ENCODE measurements at regions of chr3 and their contacts with region 1.

Region 1: DNA sequence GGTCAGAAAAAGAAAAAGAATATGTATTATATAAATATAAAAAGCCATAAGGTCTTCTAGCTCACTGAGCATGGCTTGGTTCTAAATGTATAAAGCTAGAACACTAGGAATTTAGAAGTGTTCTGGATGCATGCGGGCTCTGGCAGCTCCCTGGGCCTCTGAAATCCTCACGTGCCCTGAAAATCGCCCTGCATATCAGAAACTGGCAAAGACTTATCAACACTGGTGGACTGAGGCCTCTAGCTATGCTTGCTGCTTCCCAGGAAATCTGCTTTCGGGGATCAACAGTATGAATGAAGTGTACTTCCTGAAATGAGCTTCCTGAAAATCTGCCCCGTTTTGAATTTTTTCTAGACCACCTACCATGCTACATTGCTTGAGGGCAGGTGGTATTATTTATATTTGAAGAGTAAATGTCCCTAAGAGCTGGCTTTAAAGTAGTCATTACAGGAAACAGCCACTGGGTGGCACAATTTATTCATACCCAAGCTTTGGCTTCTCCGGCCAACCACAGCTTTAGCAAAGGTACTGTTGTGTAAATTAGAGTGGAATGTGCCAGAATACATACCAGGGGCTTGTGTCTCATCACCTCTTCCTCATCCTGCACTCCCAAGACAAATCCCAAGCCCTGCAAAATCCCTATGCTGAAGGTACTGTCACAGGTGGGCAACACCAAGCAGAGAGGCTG is 17.7 kb downstream of the CRTAP start:
- DNase-seq: peak; percentile 51 to 85
- H3K4me3 ChIP-seq: no peak overlapping the region
- H3K27ac ChIP-seq: no peak overlapping the region
- H3K4me1 ChIP-seq: peaks cover 3 to 20% (median 18%) of the 10 kb centered on the region in 4 donors
- H3K27me3 ChIP-seq: no peaks in the 10 kb centered on the region
- CTCF ChIP-seq: peak in 5 of 7 experiments; percentile 57 to 70 (median 66)
- EP300 ChIP-seq: no peak
- POLR2A ChIP-seq: no peak

Region 2: GRCh38 chr3:33372218-33373081 is 241.0 kb after region 1 on chr3:
- intact Hi-C with region 1: loop called (anchors 10 kb)
- DNase-seq: peak; percentile 45 to 76
- H3K4me3 ChIP-seq: peak overlapping the region in 1 of 4 donors; percentile 13
- H3K27ac ChIP-seq: no peak overlapping the region
- H3K4me1 ChIP-seq: peaks cover 0 to 11% (median 9%) of the 10 kb centered on the region in 4 donors
- H3K27me3 ChIP-seq: no peaks in the 10 kb centered on the region
- CTCF ChIP-seq: peak in 5 of 7 experiments; percentile 81 to 92 (median 87)
- EP300 ChIP-seq: no peak
- POLR2A ChIP-seq: no peak

Measured in stomach (tissue), 19 donors.